Activated naive CD4-positive, alpha-beta T cell treated with anti-CD3 and anti-CD28 coated beads for 36 hours (primary cell): ENCODE measurements at regions of chr1 and their contacts with region 1.

Region 1: GRCh38 chr1:248858891-248859889 is at the start of gene ZNF692:
- DNase-seq: peak; percentile 97
- H3K4me3 Mint-ChIP-seq: peak within 1 kb of the TSS; percentile 94
- H3K27ac Mint-ChIP-seq: peak within 1 kb of the TSS; percentile 93
- H3K4me1 Mint-ChIP-seq: peaks cover 65% of the 10 kb centered on the region
- H3K27me3 Mint-ChIP-seq: no peaks in the 10 kb centered on the region
- total RNA-seq, gene ZNF692: 87.6 to 88.7 TPM

Region 2: DNA sequence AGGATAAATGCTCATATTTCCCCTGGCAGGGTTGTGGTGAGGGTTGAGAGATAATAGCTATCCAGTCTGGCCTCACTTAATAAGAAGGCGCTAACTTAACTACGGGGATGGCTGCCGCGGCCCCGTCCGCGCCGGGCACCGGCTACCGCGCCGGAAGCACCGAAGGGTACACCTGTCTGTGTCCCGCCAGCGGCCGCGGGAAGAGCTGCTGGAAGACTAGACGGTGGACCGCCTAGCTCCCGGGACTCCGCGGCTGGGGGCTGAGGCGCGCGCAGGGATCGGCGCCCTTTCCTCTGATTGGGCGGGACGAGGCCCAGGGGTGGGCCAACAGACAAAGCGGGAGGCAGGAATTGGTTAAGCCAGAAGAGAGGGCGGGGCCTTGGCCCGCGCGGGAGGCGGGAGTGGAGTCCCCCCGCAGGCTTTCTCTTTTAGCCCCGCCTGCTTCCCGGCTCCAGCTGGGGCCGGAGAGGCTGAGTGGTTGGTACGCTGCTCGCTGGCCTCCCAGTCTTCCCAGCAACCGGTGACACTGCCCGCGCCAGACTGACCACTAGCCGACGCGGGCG is 21.3 kb before region 1 on chr1 and contains the start of gene ZNF672:
- CTCF ChIA-PET with region 1: interaction called, 16 read pairs
- intact Hi-C with region 1: loop called (anchors 1 kb)
- DNase-seq: peak; percentile 96
- H3K4me3 Mint-ChIP-seq: no peak within 1 kb of the TSS
- H3K27ac Mint-ChIP-seq: no peak within 1 kb of the TSS
- H3K4me1 Mint-ChIP-seq: peaks cover 22% of the 10 kb centered on the region
- H3K27me3 Mint-ChIP-seq: peaks cover 2% of the 10 kb centered on the region
- total RNA-seq, gene ZNF672: 51.6 to 53.4 TPM

Region 3: GRCh38 chr1:248873409-248873992 is 14.3 kb after region 1 on chr1:
- CTCF ChIA-PET with region 1: interaction called, 28 read pairs
- intact Hi-C with region 1: loop called (anchors 1 kb)
- DNase-seq: peak; percentile 96
- H3K4me3 Mint-ChIP-seq: peak overlapping the region; percentile 85
- H3K27ac Mint-ChIP-seq: peak overlapping the region; percentile 93
- H3K4me1 Mint-ChIP-seq: peaks cover 16% of the 10 kb centered on the region
- H3K27me3 Mint-ChIP-seq: peaks cover 3% of the 10 kb centered on the region

Region 4: DNA sequence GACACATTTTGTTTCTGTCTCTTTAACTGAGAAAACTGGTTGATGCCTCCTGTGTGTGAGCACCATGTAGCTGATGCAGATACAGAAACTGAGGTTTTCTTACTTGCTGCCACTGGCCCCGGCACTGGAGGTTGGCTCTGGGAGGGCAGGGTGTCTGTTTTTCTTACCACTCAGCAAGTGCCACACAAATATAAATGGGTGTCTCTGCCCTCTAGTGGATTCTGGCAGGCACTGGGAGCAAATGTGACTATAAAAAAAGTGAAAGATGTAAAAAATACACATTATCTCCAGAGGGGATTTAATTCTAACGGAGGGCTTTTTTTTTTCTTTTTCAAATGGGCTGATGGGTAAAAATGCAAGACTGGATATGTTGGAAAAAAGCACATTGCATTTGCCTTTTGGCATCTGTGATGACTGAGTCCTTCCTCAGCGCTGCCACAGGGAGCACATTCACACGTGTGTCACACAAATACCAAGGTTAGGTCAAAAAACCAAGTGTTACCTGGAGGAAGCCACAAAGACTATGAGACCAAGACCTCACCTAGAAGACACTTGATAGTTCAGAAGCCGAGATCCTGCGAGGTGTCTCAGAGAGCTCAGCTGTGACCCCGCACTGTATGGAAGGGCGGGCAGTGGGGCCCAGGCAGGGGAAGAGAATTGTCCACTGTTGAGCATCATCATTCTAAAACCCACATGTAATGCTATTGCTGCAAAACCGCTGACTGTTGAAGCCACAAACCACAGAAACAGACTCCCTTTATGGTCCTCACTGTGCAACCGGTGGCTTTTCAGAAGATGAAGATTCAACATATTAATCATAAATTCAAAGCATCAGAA is 65.7 kb after region 1 on chr1:
- CTCF ChIA-PET with region 1: no interaction called
- intact Hi-C with region 1: loop called (anchors 1 kb)
- DNase-seq: peak; percentile 75
- H3K4me3 Mint-ChIP-seq: no peak overlapping the region
- H3K27ac Mint-ChIP-seq: no peak overlapping the region
- H3K4me1 Mint-ChIP-seq: peaks cover 8% of the 10 kb centered on the region
- H3K27me3 Mint-ChIP-seq: no peaks in the 10 kb centered on the region